ENCODE measurements at regions of chr18 and their contacts with region 1.

Region 1: GRCh38 chr18:70195852-70196434 is 9.5 kb downstream of the RTTN start:
- DNase-seq: no peak

Region 2: DNA sequence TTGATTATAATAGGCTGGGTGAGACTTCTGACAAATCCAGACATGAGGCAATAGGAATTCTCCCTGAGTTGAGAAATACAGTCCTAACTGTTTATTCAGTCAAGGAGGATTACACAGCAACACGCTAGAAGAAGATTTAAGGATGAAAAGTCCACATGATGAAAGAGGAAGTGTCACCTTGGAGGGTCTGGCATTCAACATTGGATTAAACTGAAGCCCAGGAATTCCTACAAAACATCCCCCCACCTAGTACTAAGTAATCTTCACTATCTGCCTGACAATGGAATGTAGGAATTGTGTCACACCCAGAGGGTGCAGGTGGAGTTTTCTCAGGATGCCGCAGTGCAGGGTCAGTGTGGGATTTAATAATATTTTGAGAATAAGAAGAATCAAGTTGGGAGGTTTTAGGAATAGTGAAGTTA is 235.3 kb after region 1 on chr18:
- intact Hi-C with region 1: loop called (anchors 1 kb)
- DNase-seq: no peak

Region 3: DNA sequence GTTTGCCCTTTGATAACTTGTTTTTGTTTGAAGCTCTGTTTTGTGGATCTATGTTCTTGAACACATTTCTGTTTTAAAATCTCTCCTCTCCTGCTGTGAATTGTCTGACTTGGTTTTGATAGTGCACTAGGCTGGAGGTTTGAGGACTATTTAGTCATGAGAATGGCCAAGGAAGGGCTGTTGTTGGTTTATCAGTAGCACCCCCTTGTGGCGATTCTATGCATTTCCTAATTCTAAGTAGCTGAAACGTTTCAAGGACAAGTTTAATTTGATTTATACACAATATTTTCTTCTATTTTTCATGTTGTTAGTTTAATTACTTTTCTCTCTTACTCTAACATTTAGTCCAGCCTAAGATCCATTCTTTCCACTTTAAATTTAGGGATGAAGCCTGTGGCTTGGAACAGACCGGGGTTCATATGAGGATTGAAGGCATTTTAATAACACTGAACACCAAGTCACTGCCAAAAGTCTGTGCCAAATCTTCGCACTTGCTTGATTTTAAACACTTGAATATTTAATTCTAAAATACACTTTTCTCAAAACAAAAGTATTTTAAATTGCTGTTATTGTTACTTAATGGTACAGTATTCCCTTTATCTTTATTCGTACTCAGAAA is 258.9 kb after region 1 on chr18:
- intact Hi-C with region 1: loop called (anchors 5 kb)
- DNase-seq: no peak